Calu3 (cell line): ENCODE measurements at regions of chr9 and their contacts with region 1.

Region 1: GRCh38 chr9:130895481-130896232 is 955 bp downstream of the QRFP start:
- DNase-seq: no peak
- H3K4me3 Mint-ChIP-seq: no peak overlapping the region
- H3K27ac Mint-ChIP-seq: no peak overlapping the region
- H3K4me1 Mint-ChIP-seq: no peaks in the 10 kb centered on the region
- H3K27me3 Mint-ChIP-seq: peaks cover 16% of the 10 kb centered on the region
- CTCF ChIP-seq: no peak

Region 2: GRCh38 chr9:130940693-130941576 is 45.3 kb after region 1 on chr9:
- CTCF ChIA-PET with region 1: no interaction called
- intact Hi-C with region 1: loop called (anchors 2 kb)
- DNase-seq: peak; percentile 90
- H3K4me3 Mint-ChIP-seq: peak overlapping the region; percentile 5
- H3K27ac Mint-ChIP-seq: no peak overlapping the region
- H3K4me1 Mint-ChIP-seq: peaks cover 11% of the 10 kb centered on the region
- H3K27me3 Mint-ChIP-seq: peaks cover 79% of the 10 kb centered on the region
- CTCF ChIP-seq: peak; percentile 70